ENCODE measurements at regions of chr6 and their contacts with region 1.

Region 1: GRCh38 chr6:154928325-154928922 is 66.7 kb upstream of the TIAM2 start:
- DNase-seq: peak; percentile 35 to 78
- ATAC-seq: peak; percentile 58 to 76 (median 74)
- H3K4me3 ChIP-seq: no peak overlapping the region
- H3K4me3 Mint-ChIP-seq: no peak overlapping the region
- H3K27ac ChIP-seq: no peak overlapping the region
- H3K27ac Mint-ChIP-seq: no peak overlapping the region
- H3K4me1 ChIP-seq: no peaks in the 10 kb centered on the region
- H3K4me1 Mint-ChIP-seq: peaks cover 6 to 9% of the 10 kb centered on the region in 2 donors
- H3K27me3 ChIP-seq: no peaks in the 10 kb centered on the region
- H3K27me3 Mint-ChIP-seq: no peaks in the 10 kb centered on the region
- CTCF ChIP-seq: peak; percentile 82

Region 2: GRCh38 chr6:154868143-154868594 is 60.3 kb before region 1 on chr6:
- intact Hi-C with region 1: no loop called
- DNase-seq: peak in 1 of 2 donors; percentile 54
- ATAC-seq: no peak
- H3K4me3 ChIP-seq: no peak overlapping the region
- H3K4me3 Mint-ChIP-seq: no peak overlapping the region
- H3K27ac ChIP-seq: no peak overlapping the region
- H3K27ac Mint-ChIP-seq: no peak overlapping the region
- H3K4me1 ChIP-seq: no peaks in the 10 kb centered on the region
- H3K4me1 Mint-ChIP-seq: peaks cover 6 to 7% of the 10 kb centered on the region in 2 donors
- H3K27me3 ChIP-seq: no peaks in the 10 kb centered on the region
- H3K27me3 Mint-ChIP-seq: no peaks in the 10 kb centered on the region
- CTCF ChIP-seq: peak; percentile 53

Region 3: DNA sequence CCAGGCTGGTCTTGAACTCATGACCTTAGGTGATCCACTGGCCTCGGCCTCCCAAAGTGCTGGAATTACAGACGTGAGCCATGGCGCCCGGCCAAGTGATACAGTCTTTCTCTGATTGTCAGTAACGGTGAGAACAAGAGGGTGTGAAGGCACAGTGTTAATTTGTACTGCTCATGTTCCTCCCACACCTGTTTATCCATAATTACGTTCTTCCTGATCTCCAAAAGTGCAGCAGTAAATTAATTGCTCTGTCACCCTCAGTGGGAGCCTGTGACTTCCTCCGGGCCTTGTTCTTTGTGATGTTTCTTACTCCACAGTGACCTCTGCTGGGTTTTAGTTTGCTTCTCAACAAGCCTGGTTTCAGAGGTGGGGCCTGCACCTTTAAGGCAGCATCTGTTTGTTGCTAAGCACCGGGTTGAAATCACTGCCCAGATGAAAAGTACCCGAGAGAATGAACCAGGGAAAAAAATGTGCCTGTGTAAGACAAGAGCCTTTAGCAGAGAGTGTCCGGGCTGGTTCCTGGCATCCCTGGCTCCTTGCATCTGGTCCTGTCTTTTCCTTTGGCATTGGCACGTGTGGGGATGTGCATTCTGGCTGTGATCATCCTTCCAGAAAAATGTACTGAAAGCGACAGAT is 246.3 kb after region 1 on chr6:
- intact Hi-C with region 1: loop called (anchors 1 kb)
- DNase-seq: peak in 1 of 2 donors; percentile 83
- ATAC-seq: peak; percentile 65 to 78 (median 75)
- H3K4me3 ChIP-seq: no peak overlapping the region
- H3K4me3 Mint-ChIP-seq: no peak overlapping the region
- H3K27ac ChIP-seq: no peak overlapping the region
- H3K27ac Mint-ChIP-seq: no peak overlapping the region
- H3K4me1 ChIP-seq: no peaks in the 10 kb centered on the region
- H3K4me1 Mint-ChIP-seq: no peaks in the 10 kb centered on the region
- H3K27me3 ChIP-seq: no peaks in the 10 kb centered on the region
- H3K27me3 Mint-ChIP-seq: no peaks in the 10 kb centered on the region
- CTCF ChIP-seq: peak; percentile 36

Region 4: GRCh38 chr6:155248008-155249001 is 319.9 kb after region 1 on chr6:
- intact Hi-C with region 1: loop called (anchors 5 kb)
- DNase-seq: peak in 1 of 2 donors; percentile 30
- ATAC-seq: no peak
- H3K4me3 ChIP-seq: no peak overlapping the region
- H3K4me3 Mint-ChIP-seq: no peak overlapping the region
- H3K27ac ChIP-seq: no peak overlapping the region
- H3K27ac Mint-ChIP-seq: no peak overlapping the region
- H3K4me1 ChIP-seq: no peaks in the 10 kb centered on the region
- H3K4me1 Mint-ChIP-seq: no peaks in the 10 kb centered on the region
- H3K27me3 ChIP-seq: no peaks in the 10 kb centered on the region
- H3K27me3 Mint-ChIP-seq: no peaks in the 10 kb centered on the region
- CTCF ChIP-seq: no peak

Measured in natural killer cell (primary cell).